Activated CD4-positive, alpha-beta memory T cell treated with anti-CD3 and anti-CD28 coated beads, Interleukin-2, amount 10 ng/mL, durations not matched to agents 7 days and 5 days (primary cell): ENCODE measurements at regions of chr3 and their contacts with region 1.

Region 1: DNA sequence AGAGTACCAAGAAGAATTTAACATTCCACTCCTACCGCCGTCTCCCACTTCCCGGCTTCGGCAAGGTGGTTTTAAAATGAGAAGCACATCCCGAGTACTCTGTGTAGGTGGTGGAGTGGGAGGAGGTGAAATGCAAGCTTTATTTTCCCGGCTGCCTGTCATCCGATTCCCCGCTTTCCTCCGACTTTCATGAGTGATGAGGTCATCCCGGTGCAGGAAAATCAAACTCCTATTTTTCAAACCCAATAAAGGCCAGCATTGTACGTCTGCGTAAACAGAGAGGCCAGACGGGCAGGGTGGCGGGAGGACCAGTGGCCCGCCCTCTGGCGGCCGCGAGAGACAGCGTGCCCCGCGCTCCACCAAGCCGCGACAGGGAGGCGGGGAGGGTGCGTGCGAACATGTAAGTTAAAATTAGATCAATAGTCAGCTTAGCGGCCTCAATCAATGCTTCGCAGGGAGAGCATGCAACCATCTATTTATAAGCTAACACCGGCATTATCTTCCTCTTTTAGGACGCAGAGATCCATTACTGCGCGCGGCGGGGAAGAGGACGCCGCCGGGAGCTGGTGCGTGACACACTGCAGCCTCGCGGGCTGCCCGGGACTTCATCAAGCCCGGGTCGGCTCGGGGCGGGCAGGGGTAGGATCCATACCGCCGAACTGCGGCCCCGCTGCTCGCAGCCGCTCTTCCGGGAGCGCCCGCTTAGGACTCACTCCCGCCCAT is 163.3 kb downstream of the CD47 start:
- DNase-seq: peak; percentile 74
- H3K4me3 Mint-ChIP-seq: peak overlapping the region; percentile 76
- H3K27ac Mint-ChIP-seq: no peak overlapping the region
- H3K4me1 Mint-ChIP-seq: peaks cover 11% of the 10 kb centered on the region
- H3K27me3 Mint-ChIP-seq: peaks cover 9% of the 10 kb centered on the region

Region 2: GRCh38 chr3:107676469-107677309 is 250.8 kb before region 1 on chr3:
- CTCF ChIA-PET with region 1: interaction called, 18 read pairs
- POLR2A ChIA-PET with region 1: no interaction called
- DNase-seq: no peak
- H3K4me3 Mint-ChIP-seq: no peak overlapping the region
- H3K27ac Mint-ChIP-seq: no peak overlapping the region
- H3K4me1 Mint-ChIP-seq: peaks cover 13% of the 10 kb centered on the region
- H3K27me3 Mint-ChIP-seq: no peaks in the 10 kb centered on the region

Region 3: GRCh38 chr3:107943786-107944523 is 16.4 kb after region 1 on chr3:
- CTCF ChIA-PET with region 1: interaction called, 15 read pairs
- POLR2A ChIA-PET with region 1: interaction called, 6 read pairs
- DNase-seq: no peak
- H3K4me3 Mint-ChIP-seq: no peak overlapping the region
- H3K27ac Mint-ChIP-seq: no peak overlapping the region
- H3K4me1 Mint-ChIP-seq: peaks cover 22% of the 10 kb centered on the region
- H3K27me3 Mint-ChIP-seq: no peaks in the 10 kb centered on the region

Region 4: GRCh38 chr3:108406661-108407206 is 479.2 kb after region 1 on chr3:
- CTCF ChIA-PET with region 1: interaction called, 12 read pairs
- POLR2A ChIA-PET with region 1: no interaction called
- DNase-seq: no peak
- H3K4me3 Mint-ChIP-seq: no peak overlapping the region
- H3K27ac Mint-ChIP-seq: no peak overlapping the region
- H3K4me1 Mint-ChIP-seq: peaks cover 3% of the 10 kb centered on the region
- H3K27me3 Mint-ChIP-seq: peaks cover 2% of the 10 kb centered on the region